MCF 10A (cell line): ENCODE measurements at regions of chr4 and their contacts with region 1.

Region 1: GRCh38 chr4:46329118-46329976 is 60.6 kb downstream of the GABRA2 start:
- DNase-seq: peak; percentile 80
- H3K4me3 Mint-ChIP-seq: no peak overlapping the region
- H3K27ac Mint-ChIP-seq: no peak overlapping the region
- H3K4me1 Mint-ChIP-seq: peaks cover 5% of the 10 kb centered on the region
- H3K27me3 Mint-ChIP-seq: no peaks in the 10 kb centered on the region
- CTCF ChIP-seq: peak; percentile 65

Region 2: DNA sequence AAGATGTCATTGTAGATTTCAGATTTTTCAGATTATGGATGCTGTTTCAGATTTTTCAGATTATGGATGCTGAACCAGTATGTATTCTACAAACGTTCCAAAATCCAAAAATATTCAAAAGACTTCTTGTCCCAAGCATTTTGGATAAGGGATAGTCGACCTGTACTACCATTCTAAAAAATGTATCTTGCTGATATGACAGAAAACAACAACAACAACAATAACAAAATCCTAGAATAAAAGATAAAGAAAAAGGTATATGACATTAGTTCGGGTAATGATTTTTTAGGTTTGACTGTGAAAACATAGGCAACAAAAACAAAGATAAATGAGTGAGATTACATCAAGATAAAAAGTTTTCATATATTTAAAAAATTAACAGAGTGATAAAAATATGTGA is 61.5 kb before region 1 on chr4:
- CTCF ChIA-PET with region 1: no interaction called
- POLR2A ChIA-PET with region 1: no interaction called
- intact Hi-C with region 1: no loop called
- DNase-seq: no peak
- H3K4me3 Mint-ChIP-seq: no peak overlapping the region
- H3K27ac Mint-ChIP-seq: no peak overlapping the region
- H3K4me1 Mint-ChIP-seq: no peaks in the 10 kb centered on the region
- H3K27me3 Mint-ChIP-seq: no peaks in the 10 kb centered on the region
- CTCF ChIP-seq: no peak

Region 3: DNA sequence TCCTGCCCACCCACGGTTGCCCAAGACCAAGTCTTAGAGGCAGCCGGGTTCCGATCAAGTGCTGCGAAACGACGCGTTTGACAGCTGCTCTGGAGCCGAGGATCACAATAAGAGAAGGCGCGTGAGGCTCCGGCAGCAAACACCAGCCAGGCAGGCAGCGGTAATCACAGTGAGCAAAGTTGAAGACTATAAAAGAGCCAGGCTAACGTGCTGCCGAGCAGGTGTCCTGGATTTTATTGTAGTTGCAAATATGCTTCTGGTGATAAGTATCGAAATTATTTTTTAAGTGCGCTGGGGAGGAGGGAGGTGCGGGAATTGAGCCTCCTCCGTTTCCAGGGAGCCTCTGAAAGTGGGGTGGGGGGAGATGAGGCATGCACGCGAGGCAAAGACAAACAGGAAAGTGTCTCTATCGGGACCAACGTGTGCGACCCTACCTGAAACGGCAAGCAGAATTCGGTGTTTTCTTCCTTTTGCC is 60.0 kb after region 1 on chr4:
- CTCF ChIA-PET with region 1: interaction called, 7 read pairs
- POLR2A ChIA-PET with region 1: no interaction called
- intact Hi-C with region 1: loop called (anchors 2 kb)
- DNase-seq: peak; percentile 45
- H3K4me3 Mint-ChIP-seq: peak overlapping the region; percentile 95
- H3K27ac Mint-ChIP-seq: no peak overlapping the region
- H3K4me1 Mint-ChIP-seq: peaks cover 19% of the 10 kb centered on the region
- H3K27me3 Mint-ChIP-seq: peaks cover 12% of the 10 kb centered on the region
- CTCF ChIP-seq: no peak

Region 4: GRCh38 chr4:46648088-46648744 is 318.9 kb after region 1 on chr4:
- CTCF ChIA-PET with region 1: interaction called, 84 read pairs
- POLR2A ChIA-PET with region 1: interaction called, 3 read pairs
- intact Hi-C with region 1: loop called (anchors 1 kb)
- DNase-seq: peak; percentile 81
- H3K4me3 Mint-ChIP-seq: no peak overlapping the region
- H3K27ac Mint-ChIP-seq: no peak overlapping the region
- H3K4me1 Mint-ChIP-seq: no peaks in the 10 kb centered on the region
- H3K27me3 Mint-ChIP-seq: no peaks in the 10 kb centered on the region
- CTCF ChIP-seq: peak; percentile 60

Region 5: GRCh38 chr4:46886711-46887110 is 557.4 kb after region 1 on chr4:
- CTCF ChIA-PET with region 1: interaction called, 3 read pairs
- POLR2A ChIA-PET with region 1: no interaction called
- intact Hi-C with region 1: loop called (anchors 2 kb)
- DNase-seq: peak; percentile 29
- H3K4me3 Mint-ChIP-seq: no peak overlapping the region
- H3K27ac Mint-ChIP-seq: no peak overlapping the region
- H3K4me1 Mint-ChIP-seq: no peaks in the 10 kb centered on the region
- H3K27me3 Mint-ChIP-seq: peaks cover 29% of the 10 kb centered on the region
- CTCF ChIP-seq: peak; percentile 28

Region 6: DNA sequence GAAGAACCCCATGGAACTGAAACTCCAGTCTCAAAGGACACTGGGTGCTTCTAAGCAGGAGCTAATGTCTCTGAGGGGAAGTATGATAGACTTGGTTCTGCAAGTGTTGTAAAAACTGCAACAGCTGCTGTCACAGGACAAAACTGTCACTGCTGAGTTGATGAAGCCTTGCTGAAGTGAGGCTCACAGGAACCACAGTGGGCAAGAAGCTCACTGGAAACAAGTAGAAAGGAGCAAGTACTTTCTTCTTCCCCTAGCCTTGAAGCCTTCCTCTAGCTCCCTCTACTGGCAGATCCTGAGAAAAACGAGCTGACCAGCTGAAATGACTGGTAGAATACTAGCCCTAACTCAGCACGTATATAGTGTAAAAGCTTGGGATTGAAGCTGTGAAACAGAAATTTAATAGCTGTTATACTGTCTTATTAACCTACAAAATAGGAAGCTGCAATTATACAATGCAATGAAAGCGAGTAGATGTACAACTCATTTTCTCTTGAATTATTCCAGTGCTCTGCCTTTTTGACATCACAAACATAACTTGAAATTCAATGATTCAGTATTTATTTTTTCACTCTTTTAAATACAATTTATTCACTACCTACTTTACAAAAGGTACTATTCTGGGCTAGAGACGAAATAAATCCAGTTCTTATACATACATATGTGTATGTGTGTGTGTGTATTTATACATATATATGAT is 793.4 kb after region 1 on chr4:
- CTCF ChIA-PET with region 1: interaction called, 10 read pairs
- POLR2A ChIA-PET with region 1: no interaction called
- intact Hi-C with region 1: loop called (anchors 5 kb)
- DNase-seq: peak; percentile 86
- H3K4me3 Mint-ChIP-seq: no peak overlapping the region
- H3K27ac Mint-ChIP-seq: no peak overlapping the region
- H3K4me1 Mint-ChIP-seq: no peaks in the 10 kb centered on the region
- H3K27me3 Mint-ChIP-seq: peaks cover 60% of the 10 kb centered on the region
- CTCF ChIP-seq: peak; percentile 85